Endothelial cell of umbilical vein (primary cell): ENCODE measurements at regions of chr7 and their contacts with region 1.

Region 1: GRCh38 chr7:158695726-158696452 is 8.7 kb downstream of the NCAPG2 start:
- DNase-seq: peak; percentile 82
- H3K4me3 ChIP-seq: no peak overlapping the region
- H3K27ac ChIP-seq: no peak overlapping the region
- H3K4me1 ChIP-seq: peaks cover 6% of the 10 kb centered on the region
- H3K27me3 ChIP-seq: no peaks in the 10 kb centered on the region
- CTCF ChIP-seq: peak; percentile 63 to 72
- POLR2A ChIP-seq: no peak

Region 2: GRCh38 chr7:158102897-158103296 is 593.0 kb before region 1 on chr7:
- CTCF ChIA-PET with region 1: no interaction called
- POLR2A ChIA-PET with region 1: no interaction called
- dilution Hi-C with region 1: no loop called
- intact Hi-C with region 1: no loop called
- DNase-seq: no peak
- H3K4me3 ChIP-seq: no peak overlapping the region
- H3K27ac ChIP-seq: no peak overlapping the region
- H3K4me1 ChIP-seq: no peaks in the 10 kb centered on the region
- H3K27me3 ChIP-seq: no peaks in the 10 kb centered on the region
- CTCF ChIP-seq: no peak
- POLR2A ChIP-seq: no peak

Region 3: GRCh38 chr7:158772911-158773310 is 77.0 kb after region 1 on chr7:
- CTCF ChIA-PET with region 1: interaction called, 7 read pairs
- POLR2A ChIA-PET with region 1: no interaction called
- dilution Hi-C with region 1: no loop called
- intact Hi-C with region 1: loop called (anchors 1 kb)
- DNase-seq: no peak
- H3K4me3 ChIP-seq: no peak overlapping the region
- H3K27ac ChIP-seq: no peak overlapping the region
- H3K4me1 ChIP-seq: no peaks in the 10 kb centered on the region
- H3K27me3 ChIP-seq: no peaks in the 10 kb centered on the region
- CTCF ChIP-seq: peak in 1 of 2 donors; percentile 30
- POLR2A ChIP-seq: no peak

Region 4: DNA sequence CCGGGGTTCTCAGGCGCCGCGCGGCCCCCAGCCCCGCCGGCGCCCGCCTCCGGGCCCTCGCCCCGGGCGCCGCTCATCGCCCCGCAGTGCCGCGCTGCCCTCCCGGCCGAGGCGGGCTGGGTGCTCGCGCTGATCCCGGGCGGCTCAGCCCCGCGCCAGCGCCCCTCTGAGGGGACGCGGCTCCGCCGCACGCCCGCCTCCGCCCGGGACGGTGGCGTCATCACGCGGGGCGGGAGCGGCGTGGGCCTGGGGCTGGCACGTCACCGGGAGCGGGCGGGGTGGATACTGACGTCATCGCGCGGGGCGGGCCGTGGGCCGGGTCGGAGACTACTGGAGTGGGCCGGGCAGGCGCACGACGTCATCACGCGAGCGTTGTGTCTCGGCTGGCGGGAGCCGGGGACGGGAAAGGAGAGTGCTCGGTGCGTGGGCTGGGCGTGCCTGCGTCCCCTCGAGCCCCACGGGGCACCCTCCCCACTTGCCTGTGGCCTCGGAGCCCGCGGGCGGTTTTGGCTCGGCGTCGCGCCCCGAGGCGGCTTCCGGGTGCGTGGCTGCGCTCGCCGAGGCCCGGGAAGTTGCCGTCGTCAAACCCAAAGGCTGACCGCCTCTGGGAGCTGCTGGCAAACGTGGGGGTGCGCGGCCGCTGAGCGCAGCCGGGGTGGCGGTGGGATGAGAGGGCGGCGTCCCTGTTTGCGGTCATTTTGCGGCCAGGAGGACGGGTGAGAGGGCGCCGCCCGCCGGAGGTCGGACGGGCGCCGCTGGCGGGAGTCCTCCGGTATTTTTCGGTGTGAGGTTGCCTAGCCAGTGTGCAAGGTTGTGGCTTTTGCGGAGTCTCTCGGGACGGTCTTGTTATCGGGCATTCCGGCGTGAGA is 133.7 kb after region 1 on chr7 and contains the start of gene ESYT2:
- CTCF ChIA-PET with region 1: interaction called, 12 read pairs
- POLR2A ChIA-PET with region 1: no interaction called
- dilution Hi-C with region 1: no loop called
- intact Hi-C with region 1: loop called (anchors 1 kb)
- DNase-seq: peak; percentile 97
- H3K4me3 ChIP-seq: peak within 1 kb of the TSS; percentile 72 to 99 (median 80)
- H3K27ac ChIP-seq: peak within 1 kb of the TSS; percentile 66
- H3K4me1 ChIP-seq: peaks cover 10% of the 10 kb centered on the region
- H3K27me3 ChIP-seq: peaks cover 0 to 1% of the 10 kb centered on the region in 2 experiments
- CTCF ChIP-seq: peak in 1 of 2 donors; percentile 22
- POLR2A ChIP-seq: peak; percentile 92
- total RNA-seq, gene ESYT2: 40.6 and 46.6 TPM in 2 replicates

Region 5: DNA sequence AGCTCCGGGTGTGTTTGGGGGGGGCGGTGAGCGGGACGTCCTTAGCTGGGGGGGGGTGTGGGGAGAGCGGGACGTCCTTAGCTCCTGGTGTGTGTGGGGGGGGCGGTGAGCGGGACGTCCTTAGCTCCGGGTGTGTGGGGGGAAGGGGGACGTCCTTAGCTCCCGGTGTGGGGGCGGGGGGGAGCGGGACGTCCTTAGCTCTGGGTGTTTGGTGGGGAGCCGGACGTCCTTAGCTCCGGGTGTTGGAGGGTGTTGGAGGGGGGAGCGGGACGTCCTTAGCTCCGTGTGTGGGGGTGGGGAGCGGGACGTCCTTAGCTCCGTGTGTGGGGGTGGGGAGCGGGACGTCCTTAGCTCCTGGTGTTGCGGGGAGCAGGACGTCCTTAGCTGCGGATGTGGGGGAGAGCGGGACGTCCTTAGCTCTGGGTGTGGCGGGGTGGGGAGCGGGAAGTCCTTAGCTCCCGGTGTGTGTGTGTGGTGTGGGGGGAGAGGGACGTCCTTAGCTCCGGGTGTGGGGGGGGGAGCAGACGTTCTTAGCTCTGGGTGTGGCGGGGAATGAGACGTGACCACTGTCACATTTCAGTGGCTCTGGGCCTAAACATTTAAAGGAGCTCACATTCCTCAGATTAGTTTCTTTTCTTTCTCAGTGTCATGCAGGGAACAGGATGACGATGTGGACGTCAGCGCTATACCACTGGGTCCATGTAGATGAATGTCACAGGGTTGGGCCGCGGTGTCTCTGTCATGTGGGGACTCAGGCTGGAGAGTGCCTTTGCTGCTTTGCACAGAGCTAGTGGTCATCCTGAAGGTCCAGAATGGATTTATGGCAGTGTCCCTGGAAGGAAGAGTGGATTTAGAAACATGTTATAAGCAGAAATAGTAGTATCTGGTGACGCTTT is 168.0 kb after region 1 on chr7:
- CTCF ChIA-PET with region 1: interaction called, 16 read pairs
- POLR2A ChIA-PET with region 1: no interaction called
- dilution Hi-C with region 1: no loop called
- intact Hi-C with region 1: no loop called
- DNase-seq: peak; percentile 41
- H3K4me3 ChIP-seq: peak overlapping the region; percentile 4 to 54 (median 33)
- H3K27ac ChIP-seq: no peak overlapping the region
- H3K4me1 ChIP-seq: peaks cover 4% of the 10 kb centered on the region
- H3K27me3 ChIP-seq: no peaks in the 10 kb centered on the region
- CTCF ChIP-seq: no peak
- POLR2A ChIP-seq: no peak